Right ventricle myocardium inferior (tissue), 1 donor: ENCODE measurements at regions of chr6 and their contacts with region 1.

Region 1: DNA sequence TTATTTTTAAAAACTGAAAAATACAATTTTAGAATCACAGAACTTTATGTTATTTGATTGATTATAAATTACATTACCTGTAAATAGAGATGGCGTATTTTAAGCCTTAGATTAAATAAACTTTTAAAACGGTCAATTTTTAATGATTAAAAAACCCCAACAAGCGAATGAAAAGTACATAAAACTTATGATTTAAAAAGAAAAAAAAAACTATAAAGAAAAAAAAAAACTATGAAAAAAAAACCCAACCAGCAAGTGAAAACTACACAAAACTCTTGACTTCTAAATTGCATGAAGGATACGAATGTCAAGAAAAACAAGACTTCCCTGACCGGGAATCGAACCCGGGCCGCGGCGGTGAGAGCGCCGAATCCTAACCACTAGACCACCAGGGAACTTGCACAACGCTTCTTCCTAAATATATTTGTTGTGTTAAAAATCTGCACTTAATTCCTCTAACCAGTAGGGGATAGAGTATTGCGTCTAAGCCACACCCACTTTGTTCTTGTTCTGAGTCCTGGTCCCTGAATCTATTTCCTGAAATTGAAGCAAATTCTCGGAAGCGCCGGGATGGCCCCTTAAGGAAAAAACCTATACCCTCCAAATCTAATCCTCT is 10.7 kb upstream of the NCOA7 start:
- DNase-seq: peak; percentile 88
- ATAC-seq: peak; percentile 96

Region 2: GRCh38 chr6:125974214-125974866 is 194.3 kb after region 1 on chr6:
- intact Hi-C with region 1: loop called (anchors 5 kb)
- DNase-seq: no peak
- ATAC-seq: peak; percentile 60